Activated naive CD8-positive, alpha-beta T cell treated with anti-CD3 and anti-CD28 coated beads, Interleukin-2, amount 10 ng/mL, durations not matched to agents 7 days and 5 days (primary cell): ENCODE measurements at regions of chr18 and their contacts with region 1.

Region 1: DNA sequence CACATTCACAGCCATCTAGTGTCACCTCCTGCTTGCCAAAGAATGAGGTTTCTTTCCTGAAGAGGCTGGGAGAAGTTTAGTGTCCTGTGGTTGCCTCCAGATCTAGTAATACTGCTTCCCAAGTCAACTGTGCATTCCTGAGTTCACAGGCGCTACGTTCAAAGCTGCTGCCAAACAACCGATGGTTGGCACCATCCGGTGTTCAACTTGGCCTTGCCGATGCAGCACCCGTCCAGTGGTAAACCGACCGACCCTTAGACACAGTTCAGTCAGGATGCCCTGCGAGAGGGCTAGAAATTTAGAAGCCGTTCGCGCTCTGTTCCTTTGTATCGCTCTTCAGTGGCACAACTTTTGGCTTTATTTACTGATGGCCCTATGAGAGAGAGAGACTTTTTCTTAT is 28.6 kb downstream of the RMC1 start:
- DNase-seq: no peak
- ATAC-seq: no peak
- H3K4me3 Mint-ChIP-seq: no peak overlapping the region
- H3K27ac Mint-ChIP-seq: no peak overlapping the region
- H3K4me1 Mint-ChIP-seq: no peaks in the 10 kb centered on the region
- H3K27me3 Mint-ChIP-seq: no peaks in the 10 kb centered on the region

Region 2: GRCh38 chr18:22934789-22935188 is 597.1 kb before region 1 on chr18:
- POLR2A ChIA-PET with region 1: interaction called, 11 read pairs
- DNase-seq: no peak
- ATAC-seq: no peak
- H3K4me3 Mint-ChIP-seq: peak overlapping the region; percentile 91
- H3K27ac Mint-ChIP-seq: peak overlapping the region; percentile 38
- H3K4me1 Mint-ChIP-seq: peaks cover 34% of the 10 kb centered on the region
- H3K27me3 Mint-ChIP-seq: peaks cover 5% of the 10 kb centered on the region